ENCODE measurements at regions of chr6 and their contacts with region 1.

Region 1: DNA sequence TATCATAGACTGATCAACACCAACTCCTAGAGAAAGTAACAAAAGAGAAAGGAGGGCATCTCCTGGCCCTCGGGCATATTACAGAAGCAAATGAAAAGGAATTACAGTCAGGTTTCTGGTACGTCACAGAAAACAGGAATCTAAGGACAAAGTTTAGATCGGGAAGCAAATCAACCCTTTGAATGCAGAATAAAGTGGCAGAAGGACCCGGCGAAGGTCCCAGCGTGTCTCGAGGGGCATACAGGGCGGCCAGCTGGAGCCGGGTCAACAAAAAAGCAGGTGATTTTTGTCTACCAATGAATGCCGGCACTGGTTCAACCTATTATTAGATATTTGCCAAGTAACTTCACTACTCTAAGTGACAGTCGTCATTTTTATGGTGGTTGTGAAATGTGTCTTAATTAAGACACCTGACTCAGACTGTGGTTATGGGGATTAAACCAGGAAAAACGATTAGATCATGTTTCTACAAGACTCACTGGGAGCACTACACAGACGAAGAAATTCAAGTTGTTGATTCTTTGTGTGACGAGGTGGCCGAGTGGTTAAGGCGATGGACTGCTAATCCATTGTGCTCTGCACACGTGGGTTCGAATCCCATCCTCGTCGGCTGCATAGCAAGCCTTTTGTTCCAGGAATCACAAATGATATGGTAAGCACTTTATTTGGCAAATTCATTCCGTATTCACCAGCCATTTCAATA is 12.4 kb upstream of the ZSCAN9 start:
- DNase-seq: peak; percentile 80
- ATAC-seq: peak; percentile 88
- H3K4me3 ChIP-seq: peak overlapping the region; percentile 47 to 53
- H3K27ac ChIP-seq: peak overlapping the region; percentile 38
- H3K4me1 ChIP-seq: peaks cover 5 to 15% of the 10 kb centered on the region in 2 experiments; a peak in 3 of 4 replicates
- H3K27me3 ChIP-seq: no peaks in the 10 kb centered on the region
- CTCF ChIP-seq: peak in 2 of 3 experiments; percentile 19 to 38; a peak in 2 of 6 replicates
- POLR2A ChIP-seq: no peak
- RAD21 ChIP-seq: peak; percentile 62

Region 2: DNA sequence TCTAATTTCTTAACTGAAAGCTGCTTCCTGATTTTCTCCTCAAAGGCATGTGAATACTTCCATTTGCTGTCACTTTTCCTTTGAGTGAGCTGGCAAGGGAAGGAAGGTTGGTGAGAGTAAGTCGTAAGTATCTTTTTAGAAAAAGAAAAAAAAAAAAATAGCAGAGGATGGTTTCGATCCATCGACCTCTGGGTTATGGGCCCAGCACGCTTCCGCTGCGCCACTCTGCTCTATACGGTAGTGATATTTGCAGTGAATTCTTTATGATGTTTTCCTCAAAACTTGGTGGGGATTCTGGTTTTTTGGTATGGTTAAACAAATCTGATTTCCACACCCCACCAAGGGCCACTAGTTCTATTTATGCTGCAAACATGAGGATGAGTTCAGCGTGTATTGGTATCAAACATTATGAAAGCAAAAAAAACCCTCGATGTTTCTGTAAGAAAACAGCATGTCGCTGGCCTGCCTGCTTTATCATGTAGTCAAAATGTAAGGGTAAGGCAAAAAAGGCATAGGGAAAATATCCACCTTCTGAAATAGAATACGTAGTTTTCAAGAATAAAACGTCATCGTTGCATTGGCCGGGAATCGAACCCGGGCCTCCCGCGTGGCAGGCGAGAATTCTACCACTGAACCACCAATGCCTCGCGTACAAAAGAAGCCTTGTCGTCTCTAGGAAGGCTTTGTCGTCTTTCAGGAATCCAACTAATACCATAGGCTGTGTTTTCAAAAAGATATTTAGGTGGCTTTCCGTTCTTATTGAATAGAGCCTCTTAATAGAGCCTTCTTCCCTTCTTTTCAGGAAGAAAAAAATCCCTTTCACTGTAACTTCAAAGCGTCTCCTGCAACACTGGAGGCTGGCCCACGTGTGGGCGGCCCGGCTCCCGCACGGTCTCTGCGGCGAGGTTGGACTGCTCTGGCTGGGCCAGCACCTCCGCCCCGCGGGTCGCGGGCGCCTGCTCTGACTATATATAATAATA is 310.0 kb before region 1 on chr6:
- CTCF ChIA-PET with region 1: no interaction called
- POLR2A ChIA-PET with region 1: no interaction called
- RAD21 ChIA-PET with region 1: no interaction called
- intact Hi-C with region 1: loop called (anchors 5 kb)
- DNase-seq: peak; percentile 75
- ATAC-seq: peak; percentile 88
- H3K4me3 ChIP-seq: peak overlapping the region; percentile 40 to 55
- H3K27ac ChIP-seq: peak overlapping the region; percentile 76
- H3K4me1 ChIP-seq: peaks cover 6 to 34% of the 10 kb centered on the region in 2 experiments
- H3K27me3 ChIP-seq: no peaks in the 10 kb centered on the region
- CTCF ChIP-seq: no peak
- POLR2A ChIP-seq: no peak
- RAD21 ChIP-seq: 0 out of 2 replicates have a peak, but pooled peaks have one; percentile 11

Region 3: DNA sequence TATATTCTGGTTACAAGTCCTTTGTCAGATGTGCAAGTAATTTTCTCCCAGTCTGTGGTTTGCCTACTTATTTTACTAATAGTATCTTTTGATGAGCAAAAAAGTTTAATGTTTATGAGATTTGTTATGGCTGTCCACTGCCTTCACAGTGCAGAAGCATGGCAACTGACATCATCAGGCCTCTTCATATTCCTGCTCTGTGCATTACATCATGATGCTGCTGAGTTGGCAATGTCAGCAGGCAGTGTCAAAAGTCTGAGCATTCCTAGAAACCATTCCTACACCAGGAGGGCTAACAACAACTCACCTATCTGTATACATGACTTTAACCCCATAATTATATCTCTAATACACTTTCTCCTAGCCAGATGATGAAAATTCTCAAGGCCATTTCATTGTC is 289.7 kb before region 1 on chr6:
- CTCF ChIA-PET with region 1: no interaction called
- POLR2A ChIA-PET with region 1: no interaction called
- RAD21 ChIA-PET with region 1: no interaction called
- intact Hi-C with region 1: no loop called
- DNase-seq: no peak
- ATAC-seq: no peak
- H3K4me3 ChIP-seq: no peak overlapping the region
- H3K27ac ChIP-seq: no peak overlapping the region
- H3K4me1 ChIP-seq: no peaks in the 10 kb centered on the region
- H3K27me3 ChIP-seq: no peaks in the 10 kb centered on the region
- CTCF ChIP-seq: no peak
- POLR2A ChIP-seq: no peak
- RAD21 ChIP-seq: no peak

Region 4: DNA sequence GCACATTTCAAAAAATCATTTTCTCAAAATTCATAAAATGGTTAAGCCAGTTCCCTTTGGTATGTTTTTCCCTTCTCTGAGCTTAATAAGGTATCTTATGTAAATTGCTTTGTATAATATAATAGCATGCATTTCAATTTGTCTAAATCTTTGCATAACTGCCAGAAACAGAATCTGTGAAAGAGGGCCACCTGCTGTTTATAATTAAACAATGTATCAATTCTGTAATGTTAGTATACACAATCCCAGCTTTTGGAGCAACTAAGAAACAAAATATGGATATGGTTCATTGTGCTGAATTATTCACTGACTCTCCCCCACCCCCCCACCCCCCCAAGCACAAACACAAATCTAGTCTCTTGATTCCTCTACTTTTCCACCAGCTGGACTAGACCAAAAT is 367.8 kb after region 1 on chr6:
- CTCF ChIA-PET with region 1: no interaction called
- POLR2A ChIA-PET with region 1: no interaction called
- RAD21 ChIA-PET with region 1: no interaction called
- intact Hi-C with region 1: no loop called
- DNase-seq: no peak
- ATAC-seq: no peak
- H3K4me3 ChIP-seq: no peak overlapping the region
- H3K27ac ChIP-seq: no peak overlapping the region
- H3K4me1 ChIP-seq: no peaks in the 10 kb centered on the region
- H3K27me3 ChIP-seq: no peaks in the 10 kb centered on the region
- CTCF ChIP-seq: peak; percentile 2 to 35 (median 31); a peak in 3 of 6 replicates
- POLR2A ChIP-seq: no peak
- RAD21 ChIP-seq: peak; percentile 54